H1 (cell line): ENCODE measurements at regions of chr19 and their contacts with region 1.

Region 1: GRCh38 chr19:14405758-14406644 is 13.1 kb downstream of the DDX39A start:
- DNase-seq: peak; percentile 97 to 99
- H3K4me3 ChIP-seq: peak overlapping the region; percentile 13 to 48 (median 22); a peak in 4 of 8 replicates
- H3K27ac ChIP-seq: peak overlapping the region; percentile 44
- H3K4me1 ChIP-seq: peaks cover 0 to 13% (median 5%) of the 10 kb centered on the region in 4 experiments; a peak in 5 of 7 replicates
- H3K27me3 ChIP-seq: no peaks in the 10 kb centered on the region
- CTCF ChIP-seq: peak; percentile 81 to 97 (median 97)
- EP300 ChIP-seq: no peak
- POLR2A ChIP-seq: peak in 1 of 2 experiments; percentile 65; a peak in 1 of 3 replicates
- RAD21 ChIP-seq: peak; percentile 90 to 96

Region 2: GRCh38 chr19:14198384-14199376 is 207.3 kb before region 1 on chr19:
- CTCF ChIA-PET with region 1: interaction called, 17 read pairs
- POLR2A ChIA-PET with region 1: interaction called, 6 read pairs
- DNase-seq: no peak
- H3K4me3 ChIP-seq: no peak overlapping the region
- H3K27ac ChIP-seq: no peak overlapping the region
- H3K4me1 ChIP-seq: peaks cover 0 to 16% (median 10%) of the 10 kb centered on the region in 4 experiments; a peak in 6 of 7 replicates
- H3K27me3 ChIP-seq: no peaks in the 10 kb centered on the region
- CTCF ChIP-seq: peak; percentile 37 to 53 (median 41)
- EP300 ChIP-seq: no peak
- POLR2A ChIP-seq: no peak
- RAD21 ChIP-seq: peak; percentile 40 to 52; a peak in 3 of 4 replicates

Region 3: GRCh38 chr19:14383661-14384555 is 22.1 kb before region 1 on chr19:
- CTCF ChIA-PET with region 1: interaction called, 19 read pairs
- POLR2A ChIA-PET with region 1: interaction called, 9 read pairs
- DNase-seq: no peak
- H3K4me3 ChIP-seq: no peak overlapping the region
- H3K27ac ChIP-seq: no peak overlapping the region
- H3K4me1 ChIP-seq: peaks cover 2 to 19% (median 6%) of the 10 kb centered on the region in 4 experiments
- H3K27me3 ChIP-seq: no peaks in the 10 kb centered on the region
- CTCF ChIP-seq: no peak
- EP300 ChIP-seq: no peak
- POLR2A ChIP-seq: no peak
- RAD21 ChIP-seq: no peak

Region 4: DNA sequence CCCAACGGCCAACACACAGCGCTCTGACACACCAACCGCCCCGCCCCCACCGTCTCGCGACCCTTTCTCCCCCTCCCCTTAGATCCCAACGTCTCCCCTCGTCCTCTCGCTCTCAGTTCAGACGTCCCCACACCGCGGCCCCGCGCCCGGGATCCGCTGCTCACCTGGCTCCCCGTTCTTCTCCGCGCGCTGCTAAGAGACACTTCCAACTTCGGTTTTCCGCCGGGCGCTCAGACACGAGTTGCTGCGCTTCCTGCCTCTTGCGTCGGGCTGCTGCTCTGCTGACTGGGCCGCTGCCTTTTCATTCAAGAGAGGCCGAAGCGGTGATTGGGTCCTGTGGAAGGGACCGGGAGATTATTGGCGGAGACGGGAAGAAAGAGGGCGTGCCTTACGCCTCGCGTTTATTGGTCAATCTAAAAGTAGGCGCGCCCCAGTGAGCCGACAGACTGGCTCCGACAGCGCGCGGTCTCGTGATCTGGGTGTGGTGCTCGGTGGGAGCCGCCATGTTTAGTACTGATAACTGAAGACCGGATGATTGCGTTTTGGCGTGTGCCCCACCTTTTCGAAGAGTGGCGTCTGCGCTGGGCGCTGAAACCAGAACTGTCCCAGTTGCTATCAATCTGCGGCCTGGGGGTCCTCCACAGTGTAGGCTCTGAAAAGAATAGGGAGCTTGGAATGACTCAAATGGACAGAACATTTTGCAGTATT is 13.3 kb after region 1 on chr19 and contains the start of gene DDX39A:
- CTCF ChIA-PET with region 1: interaction called, 22 read pairs
- POLR2A ChIA-PET with region 1: interaction called, 12 read pairs
- DNase-seq: peak; percentile 90 to 94
- H3K4me3 ChIP-seq: peak within 1 kb of the TSS; percentile 65 to 83 (median 77)
- H3K27ac ChIP-seq: peak within 1 kb of the TSS; percentile 79
- H3K4me1 ChIP-seq: peaks cover 0 to 6% (median 2%) of the 10 kb centered on the region in 4 experiments; a peak in 4 of 7 replicates
- H3K27me3 ChIP-seq: no peaks in the 10 kb centered on the region
- CTCF ChIP-seq: no peak
- EP300 ChIP-seq: no peak
- POLR2A ChIP-seq: peak in 1 of 2 experiments; percentile 89; a peak in 2 of 3 replicates
- RAD21 ChIP-seq: no peak
- total RNA-seq, gene DDX39A: 124 and 139 TPM in 2 replicates